CD4-positive, alpha-beta memory T cell (primary cell): ENCODE measurements at regions of chr2 and their contacts with region 1.

Region 1: DNA sequence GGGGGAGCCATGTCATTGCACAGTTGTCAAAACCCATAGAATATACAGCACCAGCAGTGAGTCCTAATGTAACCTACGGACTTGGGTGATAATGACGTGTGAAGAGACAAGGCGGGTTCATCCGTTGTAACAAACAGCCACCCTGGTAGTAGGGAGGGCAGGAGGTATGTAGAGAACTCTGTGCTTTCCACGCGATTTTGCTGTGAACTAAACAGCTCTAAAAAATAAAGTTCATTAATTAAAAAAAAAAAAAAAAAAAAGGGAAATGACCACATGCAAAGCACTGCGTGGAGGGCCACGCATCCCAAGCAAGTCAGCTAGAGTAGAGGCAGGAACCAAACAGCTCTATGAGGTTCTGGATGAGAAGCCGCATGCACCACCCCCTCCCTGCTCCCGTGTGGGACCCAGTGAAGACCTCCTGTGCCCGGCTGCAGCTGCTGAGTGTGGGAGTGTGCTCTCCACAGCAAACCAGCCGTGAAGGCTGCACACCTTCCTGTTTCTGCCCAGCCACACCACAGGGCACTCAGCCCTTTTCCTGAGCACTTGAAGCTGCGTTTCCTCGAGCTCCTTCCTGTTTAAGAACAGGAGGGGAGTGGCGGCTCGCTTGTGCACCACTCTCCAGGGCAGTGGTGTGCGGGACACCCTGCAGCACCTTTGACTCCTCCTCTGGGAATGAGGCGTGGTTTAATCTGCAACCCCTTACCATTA is 65.6 kb downstream of the ODC1 start:
- DNase-seq: peak; percentile 63 to 79 (median 72)
- H3K4me3 ChIP-seq: peak overlapping the region; percentile 40 to 68
- H3K4me3 Mint-ChIP-seq: peak overlapping the region; percentile 63 to 85 (median 80)
- H3K27ac ChIP-seq: peak overlapping the region; percentile 36
- H3K27ac Mint-ChIP-seq: peak overlapping the region; percentile 69 to 96 (median 92)
- H3K4me1 ChIP-seq: peaks cover 97% of the 10 kb centered on the region
- H3K4me1 Mint-ChIP-seq: peaks cover 68 to 96% (median 86%) of the 10 kb centered on the region in 4 donors
- H3K27me3 ChIP-seq: no peaks in the 10 kb centered on the region
- H3K27me3 Mint-ChIP-seq: no peaks in the 10 kb centered on the region

Region 2: GRCh38 chr2:10302479-10303180 is 79.9 kb before region 1 on chr2 and contains the start of gene HPCAL1:
- CTCF ChIA-PET with region 1: interaction called, 22 read pairs
- POLR2A ChIA-PET with region 1: interaction called, 43 read pairs
- intact Hi-C with region 1: loop called (anchors 1 kb)
- DNase-seq: peak; percentile 79 to 88 (median 85)
- H3K4me3 ChIP-seq: peak within 1 kb of the TSS; percentile 75 to 77
- H3K4me3 Mint-ChIP-seq: peak within 1 kb of the TSS; percentile 97 to 100 (median 98)
- H3K27ac ChIP-seq: peak within 1 kb of the TSS; percentile 65
- H3K27ac Mint-ChIP-seq: peak within 1 kb of the TSS; percentile 87 to 96 (median 94)
- H3K4me1 ChIP-seq: peaks cover 66% of the 10 kb centered on the region
- H3K4me1 Mint-ChIP-seq: peaks cover 56 to 86% (median 72%) of the 10 kb centered on the region in 4 donors
- H3K27me3 ChIP-seq: no peaks in the 10 kb centered on the region
- H3K27me3 Mint-ChIP-seq: no peaks in the 10 kb centered on the region
- total RNA-seq, gene HPCAL1: 77.1 to 80.7 TPM

Region 3: GRCh38 chr2:10316336-10316735 is 66.2 kb before region 1 on chr2:
- CTCF ChIA-PET with region 1: no interaction called
- POLR2A ChIA-PET with region 1: no interaction called
- intact Hi-C with region 1: no loop called
- DNase-seq: no peak
- H3K4me3 ChIP-seq: no peak overlapping the region
- H3K4me3 Mint-ChIP-seq: peak overlapping the region in 4 of 8 donors; percentile 2 to 49 (median 16)
- H3K27ac ChIP-seq: no peak overlapping the region
- H3K27ac Mint-ChIP-seq: peak overlapping the region; percentile 43 to 78 (median 67)
- H3K4me1 ChIP-seq: peaks cover 30% of the 10 kb centered on the region
- H3K4me1 Mint-ChIP-seq: peaks cover 28 to 58% (median 46%) of the 10 kb centered on the region in 4 donors
- H3K27me3 ChIP-seq: no peaks in the 10 kb centered on the region
- H3K27me3 Mint-ChIP-seq: no peaks in the 10 kb centered on the region

Region 4: DNA sequence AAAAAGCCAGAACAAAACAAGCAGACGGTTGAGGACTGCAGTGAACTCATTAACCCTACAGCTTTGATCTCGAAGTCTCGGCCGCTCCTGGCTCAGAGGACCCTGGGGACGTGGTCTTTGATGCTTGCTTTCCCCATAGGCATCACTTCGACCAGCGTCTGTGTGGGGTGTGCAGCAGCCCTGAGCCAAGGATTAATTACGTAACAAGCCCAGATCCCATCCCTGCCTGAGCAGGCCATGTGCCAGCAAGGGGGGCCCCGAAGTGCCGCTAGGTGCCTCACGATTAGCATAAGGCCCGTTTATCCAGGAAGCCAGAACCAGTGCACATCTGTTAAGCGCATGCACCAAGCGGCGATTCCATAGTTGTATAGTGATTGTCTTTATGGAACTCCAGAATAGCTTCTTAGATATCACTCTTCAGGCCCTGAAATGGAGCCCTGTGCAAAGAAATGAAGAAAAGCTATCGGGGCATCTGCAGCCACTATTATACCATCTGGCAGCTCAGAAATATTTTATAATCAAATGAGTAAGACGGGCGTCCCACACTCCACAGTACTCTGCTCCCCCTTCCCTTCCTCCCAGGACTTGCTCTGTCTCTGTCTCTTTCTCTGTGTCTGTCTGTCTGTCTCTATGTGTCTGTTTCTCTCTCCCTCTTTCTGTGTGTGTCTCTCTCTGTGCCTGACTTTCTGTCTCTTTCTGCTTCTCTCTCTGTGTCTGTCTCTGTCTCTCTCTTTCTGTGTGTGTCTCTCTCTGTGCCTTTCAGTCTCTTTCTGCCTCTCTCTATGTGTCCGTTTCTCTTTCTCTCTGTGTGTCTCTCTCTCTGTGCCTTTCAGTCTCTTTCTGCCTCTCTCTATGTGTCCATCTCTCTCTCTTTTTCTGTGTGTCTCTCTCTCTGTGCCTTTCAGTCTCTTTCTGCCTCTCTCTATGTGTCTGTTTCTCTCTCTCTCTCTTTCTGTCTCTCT is 38.1 kb before region 1 on chr2:
- CTCF ChIA-PET with region 1: no interaction called
- POLR2A ChIA-PET with region 1: no interaction called
- intact Hi-C with region 1: no loop called
- DNase-seq: no peak
- H3K4me3 ChIP-seq: no peak overlapping the region
- H3K4me3 Mint-ChIP-seq: peak overlapping the region in 3 of 8 donors; percentile 7 to 25 (median 12)
- H3K27ac ChIP-seq: no peak overlapping the region
- H3K27ac Mint-ChIP-seq: peak overlapping the region in 6 of 7 donors; percentile 44 to 86 (median 84)
- H3K4me1 ChIP-seq: peaks cover 63% of the 10 kb centered on the region
- H3K4me1 Mint-ChIP-seq: peaks cover 44 to 80% (median 63%) of the 10 kb centered on the region in 4 donors
- H3K27me3 ChIP-seq: no peaks in the 10 kb centered on the region
- H3K27me3 Mint-ChIP-seq: no peaks in the 10 kb centered on the region

Region 5: DNA sequence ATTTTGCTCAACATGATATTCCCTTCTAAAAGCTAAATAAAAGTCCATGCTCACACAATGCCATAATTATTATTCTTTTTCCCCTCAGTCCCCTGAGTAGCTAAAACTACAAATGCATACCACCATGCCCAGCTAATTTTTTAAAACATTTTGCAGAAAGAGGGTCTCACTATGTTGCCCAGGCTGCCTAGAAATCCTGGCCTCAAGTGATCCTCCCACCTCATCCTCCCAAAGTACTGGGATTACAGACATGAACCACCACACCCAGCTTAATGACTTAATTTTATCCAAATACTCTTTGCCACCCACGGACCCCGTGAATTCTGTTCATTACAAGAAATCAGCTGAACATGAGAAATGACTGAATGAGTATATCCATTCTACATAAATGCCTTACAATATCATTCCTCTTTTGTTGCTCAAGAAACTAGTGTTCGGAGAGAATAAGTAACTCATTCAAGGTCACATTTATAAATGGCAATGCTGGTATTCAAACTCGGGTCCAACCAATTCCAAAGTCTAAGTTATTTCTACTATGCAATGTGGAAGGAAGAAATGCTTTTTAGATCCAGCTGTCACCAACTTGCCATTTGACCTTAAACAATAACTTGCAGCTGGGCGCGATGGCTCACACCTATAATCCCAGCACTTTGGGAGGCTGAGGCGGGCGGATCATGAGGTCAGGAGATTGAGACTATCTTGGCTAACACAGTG is 247.5 kb after region 1 on chr2:
- CTCF ChIA-PET with region 1: no interaction called
- POLR2A ChIA-PET with region 1: no interaction called
- intact Hi-C with region 1: no loop called
- DNase-seq: no peak
- H3K4me3 ChIP-seq: no peak overlapping the region
- H3K4me3 Mint-ChIP-seq: no peak overlapping the region
- H3K27ac ChIP-seq: no peak overlapping the region
- H3K27ac Mint-ChIP-seq: peak overlapping the region in 1 of 7 donors; percentile 14
- H3K4me1 ChIP-seq: no peaks in the 10 kb centered on the region
- H3K4me1 Mint-ChIP-seq: peaks cover 0 to 10% (median 5%) of the 10 kb centered on the region in 4 donors
- H3K27me3 ChIP-seq: no peaks in the 10 kb centered on the region
- H3K27me3 Mint-ChIP-seq: no peaks in the 10 kb centered on the region